ENCODE measurements at regions of chr13 and their contacts with region 1.

Region 1: GRCh38 chr13:25901460-25902376 is 150.1 kb downstream of the SHISA2 start:
- DNase-seq: no peak
- ATAC-seq: no peak
- H3K4me3 ChIP-seq: no peak overlapping the region
- H3K27ac ChIP-seq: no peak overlapping the region
- H3K4me1 ChIP-seq: no peaks in the 10 kb centered on the region
- H3K27me3 ChIP-seq: no peaks in the 10 kb centered on the region
- CTCF ChIP-seq: no peak

Region 2: DNA sequence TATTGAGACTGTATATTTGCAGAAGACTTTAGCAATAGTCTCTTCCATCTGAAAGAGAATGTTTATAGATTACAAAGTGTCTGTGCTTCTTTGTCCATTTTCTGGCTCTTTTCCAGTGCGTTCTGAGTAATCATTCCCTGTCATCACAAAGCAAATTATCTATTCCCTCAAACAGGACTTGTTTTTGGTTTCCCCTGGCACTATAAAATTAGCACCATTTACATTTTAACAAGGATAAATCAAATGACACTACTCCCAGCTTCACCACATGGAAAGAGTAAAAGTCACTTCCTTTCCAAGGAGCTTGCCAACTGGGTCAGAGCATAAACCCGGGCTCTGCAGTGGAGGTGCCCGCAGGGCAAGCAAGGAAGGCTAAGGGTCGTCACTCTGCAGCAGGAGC is 62.0 kb after region 1 on chr13:
- intact Hi-C with region 1: loop called in 1 of 2 experiments (anchors 10 kb)
- DNase-seq: no peak
- ATAC-seq: peak in 1 of 4 donors; percentile 39
- H3K4me3 ChIP-seq: no peak overlapping the region
- H3K27ac ChIP-seq: no peak overlapping the region
- H3K4me1 ChIP-seq: no peaks in the 10 kb centered on the region
- H3K27me3 ChIP-seq: no peaks in the 10 kb centered on the region
- CTCF ChIP-seq: no peak

Measured in psoas muscle (tissue), 8 donors.